Tibial artery (tissue), 4 donors: ENCODE measurements at regions of chr13 and their contacts with region 1.

Region 1: DNA sequence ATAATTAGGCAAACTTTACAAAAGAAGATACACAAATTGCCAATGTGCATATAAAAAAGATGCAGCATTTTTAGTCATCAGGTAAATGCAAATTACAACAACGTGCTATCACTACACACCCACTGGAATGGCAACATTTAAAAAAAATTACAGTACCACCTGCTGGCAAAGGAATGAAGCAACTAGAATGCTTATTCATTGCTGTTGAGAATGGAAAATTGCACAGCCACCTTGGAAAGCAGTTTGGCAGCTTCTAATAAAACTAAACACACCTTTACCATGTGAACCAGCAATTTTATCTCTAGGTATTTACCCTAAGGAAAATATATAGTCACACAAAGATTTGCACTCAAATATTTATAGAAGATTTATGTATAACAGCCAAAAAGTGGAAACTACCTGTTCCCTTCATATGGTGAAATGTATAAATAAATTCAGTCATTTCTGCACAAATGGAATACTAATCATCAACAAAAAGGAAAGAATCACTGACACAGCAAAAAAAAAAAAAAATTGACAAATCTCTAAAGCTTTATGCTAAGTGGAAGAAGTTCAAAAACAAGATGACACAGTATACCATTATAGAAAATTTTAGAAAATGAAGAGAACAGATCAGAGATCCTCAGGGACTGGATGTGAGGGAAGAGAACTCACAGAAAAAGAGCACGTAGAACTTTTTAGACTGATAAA is 30.3 kb downstream of the OXGR1 start:
- DNase-seq: no peak
- H3K4me3 ChIP-seq: no peak overlapping the region
- H3K27ac ChIP-seq: no peak overlapping the region
- H3K4me1 ChIP-seq: no peaks in the 10 kb centered on the region
- H3K27me3 ChIP-seq: no peaks in the 10 kb centered on the region
- CTCF ChIP-seq: no peak

Region 2: GRCh38 chr13:96018135-96018534 is 945.8 kb before region 1 on chr13:
- intact Hi-C with region 1: loop called (anchors 5 kb)
- DNase-seq: no peak
- H3K4me3 ChIP-seq: no peak overlapping the region
- H3K27ac ChIP-seq: no peak overlapping the region
- H3K4me1 ChIP-seq: no peaks in the 10 kb centered on the region
- H3K27me3 ChIP-seq: no peaks in the 10 kb centered on the region
- CTCF ChIP-seq: no peak